Cardiac septum (tissue), 1 donor: ENCODE measurements at regions of chr22 and their contacts with region 1.

Region 1: GRCh38 chr22:46737976-46738646 is at the start of gene CERK:
- DNase-seq: peak; percentile 93
- total RNA-seq, gene CERK: 60.0 TPM

Region 2: DNA sequence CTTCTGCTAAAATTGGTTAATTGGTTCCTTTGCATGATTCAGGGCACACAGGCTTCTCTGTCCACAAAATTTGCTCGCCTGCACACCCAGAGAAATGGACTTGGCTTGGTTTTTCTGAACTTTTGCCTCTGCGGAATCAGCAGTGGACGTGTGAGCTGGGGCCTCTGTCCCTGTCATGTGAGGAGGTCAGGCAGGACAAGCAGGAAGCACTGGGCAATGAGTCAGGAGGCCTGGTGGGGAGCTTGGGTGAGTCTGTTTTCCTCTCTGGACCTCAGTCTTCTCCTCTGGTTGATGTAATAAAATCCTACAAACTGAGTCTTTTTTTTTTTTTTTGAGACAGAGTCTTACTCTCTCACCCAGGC is 190.2 kb before region 1 on chr22:
- intact Hi-C with region 1: loop called (anchors 5 kb)
- DNase-seq: peak; percentile 87

Region 3: DNA sequence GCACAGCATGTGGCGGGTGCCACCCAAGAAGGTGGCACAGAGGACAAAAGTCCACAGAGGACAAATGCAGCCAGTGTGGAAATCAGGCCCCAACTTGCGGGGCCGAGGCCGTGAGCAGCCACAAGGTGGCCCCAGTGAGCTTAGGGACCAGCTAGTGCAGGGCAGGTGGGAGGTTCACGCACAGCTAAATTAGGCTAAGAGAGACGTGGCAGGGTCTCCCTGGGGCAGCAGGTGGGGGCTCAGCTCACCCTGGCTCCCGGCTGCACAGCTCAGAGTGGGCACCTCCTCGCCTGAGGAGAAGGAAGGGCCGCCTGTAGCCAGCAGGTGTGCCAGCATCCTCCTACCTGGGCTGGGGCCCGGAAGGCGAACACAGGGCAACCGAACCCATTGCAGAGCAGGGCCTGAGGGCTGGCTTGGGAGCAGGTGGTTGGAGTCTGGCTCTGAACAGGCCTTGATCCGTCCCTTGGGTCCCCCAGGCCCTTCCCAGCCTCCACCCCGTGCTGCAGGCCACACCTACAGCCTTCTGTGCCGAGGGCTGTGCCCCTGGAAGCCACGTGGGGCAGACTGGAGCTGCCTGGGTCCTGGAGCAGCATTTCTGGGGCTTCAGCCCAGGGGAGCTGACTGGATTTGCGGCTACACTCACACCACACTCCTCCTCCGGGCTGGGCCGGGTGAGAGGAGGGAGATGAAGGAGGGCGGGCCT is 174.6 kb before region 1 on chr22:
- intact Hi-C with region 1: loop called (anchors 5 kb)
- DNase-seq: peak; percentile 90

Region 4: DNA sequence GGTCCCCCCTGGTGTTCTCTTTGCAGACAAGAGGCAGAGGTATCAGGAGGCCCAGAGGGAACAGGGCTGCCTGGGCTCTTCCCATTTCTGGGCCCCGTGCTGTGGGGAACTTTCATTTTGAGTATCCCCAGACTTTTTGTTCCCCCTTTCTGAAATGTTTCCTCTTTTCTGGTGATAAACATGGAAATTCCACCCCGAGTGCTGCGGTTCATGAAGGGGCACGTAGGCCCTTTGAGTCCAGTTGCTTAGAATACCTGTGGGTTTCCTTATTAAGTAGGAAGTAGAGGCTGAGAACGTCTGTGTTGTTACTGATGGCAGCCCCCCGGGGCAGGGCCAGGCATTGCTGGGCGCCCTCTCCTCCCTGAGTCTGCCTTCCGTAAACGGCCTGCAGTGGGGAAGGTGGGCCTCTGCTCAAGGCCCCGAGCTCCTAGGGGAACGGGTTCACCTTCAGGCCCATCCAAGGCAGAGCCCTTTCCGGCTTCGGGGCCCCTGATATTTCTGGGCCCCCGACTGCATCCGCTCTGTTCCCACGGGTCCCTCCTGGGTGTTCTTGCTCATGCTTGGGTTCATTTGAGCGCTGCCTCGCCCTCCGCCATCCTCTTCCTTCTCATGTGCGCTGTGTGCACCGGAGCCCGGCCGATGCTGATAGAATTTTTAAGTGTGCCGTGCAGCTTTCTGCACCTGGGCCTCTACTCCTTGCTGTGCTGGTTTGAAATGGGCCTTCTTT is 36.3 kb after region 1 on chr22:
- intact Hi-C with region 1: no loop called
- DNase-seq: peak; percentile 80